Posterior vena cava (tissue), 2 donors: ENCODE measurements at regions of chr3 and their contacts with region 1.

Region 1: GRCh38 chr3:134709561-134710312 is 58.9 kb upstream of the KY start:
- DNase-seq: no peak

Region 2: DNA sequence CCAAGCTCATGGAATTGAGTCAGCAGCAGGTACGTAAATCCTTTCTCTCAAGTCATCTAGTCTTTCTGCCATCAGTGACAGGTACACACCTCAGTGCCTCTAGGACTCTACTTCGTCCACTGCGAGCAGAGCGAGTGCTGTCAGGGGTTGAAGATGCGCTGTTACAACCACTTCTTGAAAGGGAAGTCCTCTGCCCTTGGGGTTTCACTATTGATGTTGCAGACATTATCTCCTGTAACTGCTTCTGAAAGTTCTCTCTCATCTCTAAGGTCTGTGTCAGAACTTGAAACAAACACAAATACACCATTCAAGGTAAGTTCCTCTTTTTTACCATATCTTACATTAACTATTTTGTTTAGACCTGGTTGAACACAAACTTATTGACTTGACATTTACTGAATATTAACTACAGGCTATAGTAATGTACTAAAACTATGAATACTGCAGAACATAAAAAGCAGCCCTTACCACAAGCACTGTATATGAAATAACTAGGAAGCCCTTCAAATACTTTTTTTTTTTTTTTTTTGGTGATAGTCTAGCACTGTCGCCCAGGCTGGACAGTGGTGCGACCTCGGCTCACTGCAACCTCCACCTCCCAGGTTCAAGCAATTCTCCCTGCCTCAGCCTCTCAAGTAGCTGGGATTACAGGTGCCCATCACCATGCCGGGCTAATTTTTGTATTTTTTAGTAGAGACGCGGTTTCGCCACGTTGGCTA is 1089.5 kb before region 1 on chr3:
- intact Hi-C with region 1: loop called in 1 of 2 experiments (anchors 5 kb)
- DNase-seq: no peak

Region 3: GRCh38 chr3:134650431-134651346 is 59.0 kb before region 1 on chr3 and contains the start of gene KY:
- intact Hi-C with region 1: loop called in 1 of 2 experiments (anchors 2 kb)
- DNase-seq: no peak
- total RNA-seq, gene KY: 3.2 to 3.8 TPM